ENCODE measurements at regions of chr17 and their contacts with region 1.

Region 1: GRCh38 chr17:33401249-33401648 is 108.2 kb upstream of the ASIC2 start:
- DNase-seq: no peak
- H3K4me3 ChIP-seq: no peak overlapping the region
- H3K27ac ChIP-seq: no peak overlapping the region
- H3K4me1 ChIP-seq: no peaks in the 10 kb centered on the region
- H3K27me3 ChIP-seq: no peaks in the 10 kb centered on the region
- CTCF ChIP-seq: no peak
- EP300 ChIP-seq: no peak
- POLR2A ChIP-seq: no peak

Region 2: DNA sequence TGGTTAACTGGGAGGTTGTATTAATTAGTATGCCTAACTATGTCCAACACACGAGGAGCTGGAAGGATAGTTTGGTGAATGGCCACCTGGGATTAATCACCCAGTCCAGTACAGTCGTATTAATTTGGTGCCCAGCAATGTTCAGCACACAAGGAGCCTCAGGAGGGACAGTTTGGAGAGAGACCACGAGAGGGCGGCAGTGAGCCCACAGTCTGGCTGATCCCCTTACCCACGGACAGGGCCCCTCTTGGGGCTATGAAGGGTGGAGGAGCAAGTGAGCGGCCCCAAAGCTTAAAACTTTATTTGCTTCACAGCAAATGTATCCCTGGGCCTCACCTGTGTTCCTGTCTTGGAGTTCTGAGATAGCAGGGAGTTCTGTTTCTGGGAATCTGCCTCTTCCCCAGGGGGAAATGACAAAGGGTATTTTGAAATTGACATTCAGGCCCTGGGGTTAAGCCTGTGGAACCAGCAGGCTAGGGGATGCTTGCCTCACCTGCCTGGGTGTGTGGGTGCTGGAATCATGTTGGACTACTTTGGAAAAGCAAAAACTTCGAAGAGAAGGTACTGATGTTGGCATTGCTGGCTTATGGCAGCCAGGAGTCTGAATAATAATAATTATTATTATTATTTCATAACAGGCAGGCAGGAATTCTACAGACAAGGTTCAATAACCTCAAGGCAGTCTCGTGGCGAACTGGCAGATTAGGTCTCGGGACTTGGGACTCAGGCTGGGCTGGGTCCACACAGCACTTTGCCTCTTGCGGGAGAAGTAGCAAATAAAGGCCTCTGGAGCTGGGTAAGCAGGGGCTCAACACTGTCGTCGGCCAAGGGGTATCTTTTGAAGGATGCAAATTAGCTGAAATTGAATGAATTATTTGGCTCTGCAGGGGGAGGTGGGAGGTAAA is 119.4 kb after region 1 on chr17:
- intact Hi-C with region 1: loop called in 1 of 4 experiments (anchors 10 kb)
- DNase-seq: peak in 3 of 5 donors; percentile 22 to 41 (median 30)
- H3K4me3 ChIP-seq: no peak overlapping the region
- H3K27ac ChIP-seq: no peak overlapping the region
- H3K4me1 ChIP-seq: no peaks in the 10 kb centered on the region
- H3K27me3 ChIP-seq: no peaks in the 10 kb centered on the region
- CTCF ChIP-seq: no peak
- EP300 ChIP-seq: no peak
- POLR2A ChIP-seq: no peak